ENCODE measurements at regions of chr3 and their contacts with region 1.

Region 1: GRCh38 chr3:139111392-139112229 is 66.9 kb upstream of the PRR23C start:
- DNase-seq: peak; percentile 35
- H3K4me3 ChIP-seq: no peak overlapping the region
- H3K27ac ChIP-seq: no peak overlapping the region
- H3K4me1 ChIP-seq: no peaks in the 10 kb centered on the region
- H3K27me3 ChIP-seq: no peaks in the 10 kb centered on the region
- CTCF ChIP-seq: peak; percentile 83 to 88

Region 2: GRCh38 chr3:138935848-138936740 is 175.5 kb before region 1 on chr3:
- CTCF ChIA-PET with region 1: interaction called, 3 read pairs
- dilution Hi-C with region 1: no loop called
- in situ Hi-C with region 1: no loop called
- intact Hi-C with region 1: loop called (anchors 5 kb)
- DNase-seq: peak; percentile 39
- H3K4me3 ChIP-seq: peak overlapping the region; percentile 15 to 50 (median 44)
- H3K27ac ChIP-seq: no peak overlapping the region
- H3K4me1 ChIP-seq: peaks cover 19% of the 10 kb centered on the region
- H3K27me3 ChIP-seq: peaks cover 36% of the 10 kb centered on the region
- CTCF ChIP-seq: peak; percentile 63 to 87

Region 3: GRCh38 chr3:139222100-139222657 is 110.6 kb after region 1 on chr3:
- CTCF ChIA-PET with region 1: no interaction called
- dilution Hi-C with region 1: loop called (anchors 5 kb)
- in situ Hi-C with region 1: no loop called
- intact Hi-C with region 1: no loop called
- DNase-seq: no peak
- H3K4me3 ChIP-seq: no peak overlapping the region
- H3K27ac ChIP-seq: no peak overlapping the region
- H3K4me1 ChIP-seq: peaks cover 20% of the 10 kb centered on the region
- H3K27me3 ChIP-seq: no peaks in the 10 kb centered on the region
- CTCF ChIP-seq: no peak

Region 4: GRCh38 chr3:139319428-139320402 is 208.1 kb after region 1 on chr3:
- CTCF ChIA-PET with region 1: no interaction called
- dilution Hi-C with region 1: no loop called
- in situ Hi-C with region 1: loop called in 1 of 2 experiments (anchors 25 kb)
- intact Hi-C with region 1: no loop called
- DNase-seq: no peak
- H3K4me3 ChIP-seq: no peak overlapping the region
- H3K27ac ChIP-seq: no peak overlapping the region
- H3K4me1 ChIP-seq: peaks cover 18% of the 10 kb centered on the region
- H3K27me3 ChIP-seq: no peaks in the 10 kb centered on the region
- CTCF ChIP-seq: peak; percentile 32 to 37

Region 5: DNA sequence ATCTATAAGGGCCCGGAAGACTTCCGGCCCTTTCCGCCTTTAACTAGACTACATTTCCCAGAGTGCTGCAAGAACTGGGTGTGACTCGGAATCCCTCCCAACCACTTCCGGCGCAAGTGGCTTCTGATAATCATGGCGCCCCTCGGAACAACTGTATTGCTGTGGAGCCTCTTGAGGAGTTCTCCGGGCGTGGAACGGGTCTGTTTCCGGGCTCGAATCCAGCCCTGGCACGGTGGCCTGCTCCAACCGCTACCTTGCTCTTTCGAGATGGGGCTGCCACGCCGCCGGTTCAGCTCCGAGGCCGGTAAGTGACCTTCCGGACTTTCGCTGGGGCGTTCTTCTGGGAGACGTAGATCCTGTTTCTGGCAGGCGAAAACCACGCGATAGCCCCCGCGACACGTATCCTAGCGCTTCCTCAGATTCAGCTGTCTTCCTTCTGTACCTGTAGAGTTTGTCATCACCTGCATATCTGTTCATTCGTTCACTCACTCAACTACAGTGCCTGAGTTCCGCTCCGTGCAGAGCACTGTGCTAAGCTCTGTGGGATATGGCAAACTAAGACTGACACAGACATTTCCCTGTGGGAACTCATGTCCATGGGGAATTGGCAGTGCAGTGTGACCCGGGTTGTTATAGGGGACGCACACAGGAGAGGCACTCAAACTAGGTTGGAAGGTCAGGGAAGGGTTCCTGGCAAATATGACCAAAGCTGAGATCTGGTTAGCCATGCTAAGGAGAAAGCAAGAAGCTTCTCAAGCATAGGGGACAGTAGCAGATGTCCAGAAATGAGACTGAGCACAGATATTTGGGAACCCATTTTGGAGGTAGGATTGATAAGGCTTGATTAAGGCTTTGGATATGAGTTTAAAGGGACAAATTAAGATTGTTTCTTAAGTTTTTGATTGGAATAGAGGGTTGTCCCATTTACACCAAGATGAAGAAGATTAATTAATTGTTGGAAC is 232.6 kb after region 1 on chr3 and contains the start of gene MRPS22:
- CTCF ChIA-PET with region 1: no interaction called
- dilution Hi-C with region 1: loop called (anchors 5 kb)
- in situ Hi-C with region 1: loop called in 1 of 2 experiments (anchors 10 kb)
- intact Hi-C with region 1: no loop called
- DNase-seq: peak; percentile 88
- H3K4me3 ChIP-seq: peak within 1 kb of the TSS; percentile 81 to 97 (median 97)
- H3K27ac ChIP-seq: peak within 1 kb of the TSS; percentile 94
- H3K4me1 ChIP-seq: peaks cover 21% of the 10 kb centered on the region
- H3K27me3 ChIP-seq: no peaks in the 10 kb centered on the region
- CTCF ChIP-seq: no peak
- total RNA-seq, gene MRPS22: 46.3 to 54.3 TPM

Measured in mammary epithelial cell (primary cell).